CD8-positive, alpha-beta T cell (primary cell): ENCODE measurements at regions of chr9 and their contacts with region 1.

Region 1: GRCh38 chr9:6763244-6763643 is 5.5 kb downstream of the KDM4C start:
- DNase-seq: no peak
- ATAC-seq: no peak
- H3K4me3 ChIP-seq: no peak overlapping the region
- H3K4me3 Mint-ChIP-seq: no peak overlapping the region
- H3K27ac ChIP-seq: no peak overlapping the region
- H3K27ac Mint-ChIP-seq: peak overlapping the region; percentile 74
- H3K4me1 ChIP-seq: peaks cover 23% of the 10 kb centered on the region
- H3K4me1 Mint-ChIP-seq: peaks cover 72% of the 10 kb centered on the region
- H3K27me3 ChIP-seq: no peaks in the 10 kb centered on the region
- H3K27me3 Mint-ChIP-seq: no peaks in the 10 kb centered on the region
- CTCF ChIP-seq: no peak

Region 2: GRCh38 chr9:6782981-6783380 is 19.7 kb after region 1 on chr9:
- CTCF ChIA-PET with region 1: interaction called, 3 read pairs
- POLR2A ChIA-PET with region 1: no interaction called
- intact Hi-C with region 1: loop called in 1 of 2 experiments (anchors 2 kb)
- DNase-seq: no peak
- ATAC-seq: no peak
- H3K4me3 ChIP-seq: no peak overlapping the region
- H3K4me3 Mint-ChIP-seq: peak overlapping the region; percentile 4
- H3K27ac ChIP-seq: no peak overlapping the region
- H3K27ac Mint-ChIP-seq: peak overlapping the region; percentile 1
- H3K4me1 ChIP-seq: peaks cover 60% of the 10 kb centered on the region
- H3K4me1 Mint-ChIP-seq: peaks cover 76% of the 10 kb centered on the region
- H3K27me3 ChIP-seq: no peaks in the 10 kb centered on the region
- H3K27me3 Mint-ChIP-seq: no peaks in the 10 kb centered on the region
- CTCF ChIP-seq: no peak

Region 3: GRCh38 chr9:6852243-6852963 is 89.2 kb after region 1 on chr9:
- CTCF ChIA-PET with region 1: no interaction called
- POLR2A ChIA-PET with region 1: no interaction called
- intact Hi-C with region 1: no loop called
- DNase-seq: no peak
- ATAC-seq: no peak
- H3K4me3 ChIP-seq: no peak overlapping the region
- H3K4me3 Mint-ChIP-seq: no peak overlapping the region
- H3K27ac ChIP-seq: no peak overlapping the region
- H3K27ac Mint-ChIP-seq: peak overlapping the region; percentile 52
- H3K4me1 ChIP-seq: no peaks in the 10 kb centered on the region
- H3K4me1 Mint-ChIP-seq: peaks cover 6% of the 10 kb centered on the region
- H3K27me3 ChIP-seq: no peaks in the 10 kb centered on the region
- H3K27me3 Mint-ChIP-seq: no peaks in the 10 kb centered on the region
- CTCF ChIP-seq: no peak

Region 4: GRCh38 chr9:7303907-7304626 is 540.8 kb after region 1 on chr9:
- CTCF ChIA-PET with region 1: no interaction called
- POLR2A ChIA-PET with region 1: no interaction called
- intact Hi-C with region 1: no loop called
- DNase-seq: no peak
- ATAC-seq: no peak
- H3K4me3 ChIP-seq: no peak overlapping the region
- H3K4me3 Mint-ChIP-seq: no peak overlapping the region
- H3K27ac ChIP-seq: no peak overlapping the region
- H3K27ac Mint-ChIP-seq: no peak overlapping the region
- H3K4me1 ChIP-seq: no peaks in the 10 kb centered on the region
- H3K4me1 Mint-ChIP-seq: no peaks in the 10 kb centered on the region
- H3K27me3 ChIP-seq: peaks cover 0 to 3% of the 10 kb centered on the region in 2 experiments
- H3K27me3 Mint-ChIP-seq: peaks cover 9% of the 10 kb centered on the region
- CTCF ChIP-seq: no peak